Cardiac septum (tissue), 1 donor: ENCODE measurements at regions of chr11 and their contacts with region 1.

Region 1: DNA sequence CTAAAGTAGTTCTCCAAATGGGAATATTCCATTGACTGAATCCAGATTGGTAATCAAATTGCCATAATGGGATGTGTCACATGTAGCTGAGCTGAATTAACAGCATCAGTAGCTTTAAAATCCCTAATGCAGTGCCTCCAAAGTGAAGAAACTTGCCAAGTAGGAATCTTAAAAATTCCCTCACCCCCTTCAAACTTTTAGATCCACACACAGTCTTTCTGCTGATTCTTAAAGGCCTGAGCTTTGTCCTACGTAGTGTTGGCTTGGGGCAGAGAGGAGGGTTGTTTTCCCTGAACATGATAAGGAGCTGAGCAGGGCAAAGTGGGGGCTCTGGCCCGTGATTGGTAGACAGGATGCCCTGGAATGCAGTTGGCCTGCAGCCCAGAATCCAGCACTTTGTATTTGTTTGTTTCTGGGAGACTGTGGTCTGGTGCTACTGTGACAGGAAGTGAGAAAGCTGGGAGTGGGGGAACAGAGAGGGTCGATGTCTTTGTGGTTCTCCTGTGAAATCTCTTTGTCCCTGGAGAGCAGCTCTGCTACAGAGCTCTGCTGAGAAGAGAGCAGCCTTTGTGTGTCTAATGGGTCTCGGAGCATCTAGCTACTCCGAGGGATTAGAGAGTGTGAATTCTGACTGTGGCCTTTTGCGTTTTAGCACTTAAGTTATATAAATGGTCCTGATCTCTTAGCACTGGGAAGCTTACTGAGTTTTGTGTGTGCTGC is 16.9 kb downstream of the CTNND1 start:
- DNase-seq: peak; percentile 93

Region 2: DNA sequence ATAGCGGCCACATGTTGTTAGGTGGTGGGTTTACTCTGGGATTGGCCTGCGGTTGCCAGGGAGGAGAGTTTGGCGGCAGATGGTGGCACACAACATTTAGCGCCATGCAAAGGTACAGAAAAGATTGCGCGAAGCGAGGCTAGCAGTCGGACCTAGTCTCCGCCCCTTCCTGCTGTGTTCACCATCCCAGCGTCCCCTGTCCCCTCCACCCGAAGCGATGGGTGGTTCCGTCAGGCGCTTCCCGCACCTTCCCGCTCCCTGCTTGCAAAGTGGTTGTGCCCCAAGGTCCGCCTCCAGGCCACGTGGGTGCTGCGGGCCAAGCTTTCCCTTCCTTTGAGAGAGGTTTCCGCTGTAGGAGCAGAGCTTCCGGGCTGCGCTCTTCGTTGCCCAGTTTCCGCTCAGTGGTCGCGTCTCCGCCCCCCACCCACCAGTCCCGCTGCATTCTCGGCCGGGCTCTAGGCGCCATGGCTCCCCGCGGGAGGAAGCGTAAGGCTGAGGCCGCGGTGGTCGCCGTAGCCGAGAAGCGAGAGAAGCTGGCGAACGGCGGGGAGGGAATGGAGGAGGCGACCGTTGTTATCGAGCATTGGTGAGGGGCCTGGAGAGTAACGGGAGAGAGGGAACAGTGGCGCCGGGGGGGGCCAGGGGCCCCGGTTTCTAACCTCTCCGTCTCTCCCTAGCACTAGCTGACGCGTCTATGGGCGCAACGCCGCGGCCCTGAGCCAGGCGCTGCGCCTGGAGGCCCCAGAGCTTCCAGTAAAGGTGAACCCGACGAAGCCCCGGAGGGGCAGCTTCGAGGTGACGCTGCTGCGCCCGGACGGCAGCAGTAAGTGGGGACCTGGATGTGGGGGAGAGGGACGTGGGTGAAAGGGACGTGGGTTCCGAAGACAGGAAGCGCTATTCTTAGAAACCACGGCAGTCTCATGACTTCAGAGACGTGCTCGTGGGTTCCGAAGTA is 37.1 kb before region 1 on chr11 and contains the start of gene SELENOH:
- intact Hi-C with region 1: loop called (anchors 2 kb)
- DNase-seq: peak; percentile 97
- total RNA-seq, gene SELENOH: 85.5 TPM

Region 3: DNA sequence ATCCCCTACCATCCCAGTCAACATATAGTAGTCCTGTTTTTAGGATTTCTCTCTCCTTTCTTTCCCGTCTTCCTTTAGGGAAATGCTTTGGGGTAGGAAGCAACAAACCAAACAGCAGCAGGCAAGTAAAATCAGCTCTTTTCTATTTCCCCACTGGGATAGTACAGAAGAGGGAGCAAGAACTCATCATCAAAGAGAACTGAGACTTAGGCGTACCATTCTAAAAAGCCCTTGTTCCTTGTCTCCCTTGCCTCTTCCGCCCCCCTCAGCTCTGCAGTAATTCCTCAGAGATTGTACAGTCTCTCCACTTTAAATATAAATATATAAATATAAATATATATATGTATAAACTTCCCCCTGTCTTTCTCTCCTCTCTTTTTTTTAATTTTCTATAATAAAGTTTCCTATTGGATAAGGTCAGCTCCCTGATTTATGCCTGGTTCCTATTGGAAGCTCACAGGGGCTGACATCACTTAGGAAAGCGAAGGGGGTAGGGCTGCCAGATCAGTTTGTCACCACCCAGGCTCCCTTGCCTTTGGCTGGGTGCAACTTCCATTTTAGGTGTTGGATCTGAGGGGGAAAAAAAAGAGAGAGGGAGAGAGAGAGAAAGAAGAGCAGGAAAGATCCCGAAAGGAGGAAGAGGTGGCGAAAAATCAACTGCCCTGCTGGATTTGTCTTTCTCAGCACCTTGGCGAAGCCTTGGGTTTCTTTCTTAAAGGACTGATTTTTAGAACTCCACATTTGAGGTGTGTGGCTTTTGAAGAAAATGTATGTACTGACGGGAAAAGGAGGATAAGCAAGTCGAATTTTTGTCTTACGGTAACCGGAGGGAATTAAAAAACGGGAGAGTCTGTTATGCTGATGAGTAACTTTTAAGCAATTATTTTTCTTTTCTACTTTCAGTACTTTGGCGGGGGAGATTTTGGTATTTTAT is 16.9 kb before region 1 on chr11 and contains the start of gene CTNND1:
- intact Hi-C with region 1: loop called (anchors 2 kb)
- DNase-seq: peak; percentile 90
- total RNA-seq, gene CTNND1: 73.8 TPM

Region 4: DNA sequence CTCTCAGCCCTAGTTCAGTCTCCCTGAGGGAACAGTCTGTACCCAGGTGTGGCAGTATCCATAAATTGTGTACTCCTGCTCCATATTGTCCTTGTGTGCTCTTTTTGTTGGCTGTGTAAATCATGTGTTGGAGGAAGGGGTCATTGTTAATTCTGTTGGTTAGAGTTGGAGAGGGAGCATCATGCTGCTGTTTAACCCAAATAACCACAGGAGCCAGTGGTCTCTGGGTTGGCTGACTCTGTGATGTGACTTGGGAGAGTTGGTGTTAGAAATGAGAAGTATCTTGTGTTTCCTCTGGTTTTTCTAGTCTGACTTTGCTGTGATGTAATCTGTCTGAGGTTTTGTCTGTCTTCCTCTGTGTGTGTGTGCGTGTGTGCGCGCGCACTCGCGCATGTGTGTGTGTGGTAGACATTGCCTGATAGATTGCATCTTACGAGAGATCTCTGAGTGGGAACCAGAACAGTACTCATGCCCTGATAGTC is 13.6 kb after region 1 on chr11:
- intact Hi-C with region 1: loop called (anchors 2 kb)
- DNase-seq: peak; percentile 90

Region 5: GRCh38 chr11:57802411-57802810 is 23.9 kb after region 1 on chr11:
- intact Hi-C with region 1: no loop called
- DNase-seq: no peak